ENCODE measurements at regions of chr9 and their contacts with region 1.

Region 1: GRCh38 chr9:132901856-132902831 is 23.4 kb downstream of the SPACA9 start:
- DNase-seq: peak; percentile 77
- H3K4me3 Mint-ChIP-seq: no peak overlapping the region
- H3K27ac Mint-ChIP-seq: no peak overlapping the region
- H3K4me1 Mint-ChIP-seq: no peaks in the 10 kb centered on the region
- H3K27me3 Mint-ChIP-seq: no peaks in the 10 kb centered on the region
- CTCF ChIP-seq: peak; percentile 80

Region 2: DNA sequence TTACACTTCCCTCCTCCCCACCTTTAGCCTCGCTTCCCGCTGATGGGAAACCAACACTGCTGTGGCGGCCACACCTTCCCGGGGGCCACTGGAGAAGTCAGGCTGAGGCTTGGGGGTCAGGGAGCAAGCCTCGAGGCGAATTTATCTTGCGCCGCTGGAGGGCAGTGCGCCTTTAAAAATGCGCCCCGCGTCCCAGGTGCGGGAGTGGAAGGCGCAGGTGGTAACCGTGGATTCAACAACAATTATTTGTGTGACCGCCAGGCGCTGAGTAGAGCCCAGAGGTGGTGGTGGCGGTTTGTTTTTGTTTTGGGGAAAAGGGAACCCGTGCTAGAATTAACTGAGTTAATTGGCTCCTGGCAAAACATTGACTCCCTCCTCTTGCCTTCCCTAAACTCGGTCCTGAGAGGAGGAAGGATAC is 491.0 kb before region 1 on chr9:
- CTCF ChIA-PET with region 1: interaction called, 3 read pairs
- POLR2A ChIA-PET with region 1: no interaction called
- intact Hi-C with region 1: loop called (anchors 2 kb)
- DNase-seq: peak; percentile 64
- H3K4me3 Mint-ChIP-seq: peak overlapping the region; percentile 46
- H3K27ac Mint-ChIP-seq: no peak overlapping the region
- H3K4me1 Mint-ChIP-seq: peaks cover 12% of the 10 kb centered on the region
- H3K27me3 Mint-ChIP-seq: peaks cover 37% of the 10 kb centered on the region
- CTCF ChIP-seq: peak; percentile 77

Region 3: DNA sequence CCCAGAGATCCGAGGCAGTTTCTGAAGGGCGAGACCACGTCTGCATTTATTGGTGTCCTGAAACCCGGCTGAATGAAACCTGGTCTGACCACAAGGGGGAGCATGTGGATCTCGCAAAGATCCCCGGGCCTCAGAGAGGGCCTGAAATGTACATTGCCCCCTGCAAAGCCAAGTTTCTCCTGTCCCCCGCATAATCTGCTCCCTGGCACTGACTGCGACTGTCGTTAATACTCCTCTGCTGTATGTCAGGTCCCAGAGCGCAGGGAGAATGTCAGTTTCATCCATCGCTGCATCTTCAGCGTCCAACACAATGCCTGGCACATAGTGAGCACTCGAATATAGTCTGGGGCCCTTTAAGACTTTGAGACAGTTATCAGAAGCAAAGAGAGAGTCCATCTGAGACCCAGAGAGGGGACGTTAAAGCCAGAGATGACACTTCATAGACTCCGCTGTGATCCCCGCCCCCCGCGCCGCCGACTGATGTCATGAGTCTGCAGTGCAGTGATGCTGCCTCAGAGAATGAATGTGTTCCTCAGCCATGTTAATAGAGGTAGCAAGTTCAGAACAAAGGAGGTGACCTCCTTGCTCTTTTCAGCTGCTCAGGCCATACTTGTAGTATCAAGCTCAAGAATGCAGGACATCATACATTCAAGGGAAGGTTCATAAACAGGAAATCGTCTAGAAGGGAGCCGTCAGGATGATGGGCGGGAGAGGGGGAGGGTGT is 394.2 kb before region 1 on chr9:
- CTCF ChIA-PET with region 1: no interaction called
- POLR2A ChIA-PET with region 1: no interaction called
- intact Hi-C with region 1: loop called (anchors 5 kb)
- DNase-seq: peak; percentile 65
- H3K4me3 Mint-ChIP-seq: no peak overlapping the region
- H3K27ac Mint-ChIP-seq: no peak overlapping the region
- H3K4me1 Mint-ChIP-seq: no peaks in the 10 kb centered on the region
- H3K27me3 Mint-ChIP-seq: peaks cover 62% of the 10 kb centered on the region
- CTCF ChIP-seq: peak; percentile 73

Region 4: DNA sequence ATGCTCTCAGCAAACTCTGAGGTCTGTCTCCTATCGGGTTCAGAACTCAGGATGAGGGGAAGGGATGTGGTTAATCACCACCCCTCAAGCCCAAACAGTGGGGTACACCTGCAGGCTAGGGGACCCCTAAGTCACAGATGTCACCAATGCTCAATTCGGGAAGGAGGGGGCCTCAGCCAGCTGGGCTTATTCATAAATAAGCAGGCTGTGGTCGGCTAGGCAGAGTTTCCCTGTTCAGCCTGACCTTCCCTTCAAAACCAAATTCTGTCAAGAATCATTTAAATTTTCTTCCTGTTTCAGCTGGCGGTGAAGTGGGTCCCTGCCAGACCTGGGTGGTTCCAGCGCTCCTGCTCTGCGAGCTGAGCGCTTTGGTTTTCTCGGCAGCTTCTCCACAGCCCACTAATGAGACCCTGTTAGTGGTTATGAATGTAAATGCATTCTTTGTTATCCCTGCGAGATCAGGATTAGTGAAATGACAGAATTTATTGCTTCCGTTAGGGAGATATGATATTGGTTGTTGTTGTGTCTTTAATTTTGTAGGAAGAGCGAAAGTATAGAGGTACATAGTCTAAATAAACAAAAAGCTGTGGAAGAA is 92.4 kb before region 1 on chr9:
- CTCF ChIA-PET with region 1: interaction called, 4 read pairs
- POLR2A ChIA-PET with region 1: interaction called, 3 read pairs
- intact Hi-C with region 1: loop called (anchors 5 kb)
- DNase-seq: no peak
- H3K4me3 Mint-ChIP-seq: no peak overlapping the region
- H3K27ac Mint-ChIP-seq: no peak overlapping the region
- H3K4me1 Mint-ChIP-seq: no peaks in the 10 kb centered on the region
- H3K27me3 Mint-ChIP-seq: peaks cover 61% of the 10 kb centered on the region
- CTCF ChIP-seq: no peak

Region 5: DNA sequence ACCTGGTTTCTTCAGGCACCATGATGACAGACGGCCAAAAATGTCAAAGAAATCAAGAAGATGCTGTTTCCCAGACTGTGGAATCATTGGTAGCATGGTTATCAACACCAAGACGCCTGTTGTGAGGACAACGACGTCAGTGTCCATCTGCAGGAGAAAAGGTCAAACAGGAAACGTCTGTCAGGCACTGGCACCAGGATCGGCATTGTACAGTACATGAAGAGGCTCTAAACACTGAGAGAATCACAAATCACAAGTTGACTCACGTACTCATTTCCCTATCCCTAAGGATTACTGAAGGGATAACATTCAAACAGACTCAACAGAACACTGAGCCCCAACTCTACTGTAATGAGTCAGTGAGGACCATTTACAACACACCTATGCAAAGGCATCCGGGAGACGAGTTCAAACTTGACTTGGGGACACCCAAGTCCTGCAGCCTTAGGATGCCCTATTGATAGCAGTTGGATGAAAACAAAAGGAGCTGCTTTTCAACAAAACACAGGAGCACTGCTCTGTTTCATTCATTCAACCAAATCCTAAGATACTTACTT is 21.3 kb after region 1 on chr9:
- CTCF ChIA-PET with region 1: interaction called, 19 read pairs
- POLR2A ChIA-PET with region 1: interaction called, 3 read pairs
- intact Hi-C with region 1: no loop called
- DNase-seq: peak; percentile 60
- H3K4me3 Mint-ChIP-seq: no peak overlapping the region
- H3K27ac Mint-ChIP-seq: no peak overlapping the region
- H3K4me1 Mint-ChIP-seq: no peaks in the 10 kb centered on the region
- H3K27me3 Mint-ChIP-seq: no peaks in the 10 kb centered on the region
- CTCF ChIP-seq: no peak

Region 6: GRCh38 chr9:132931178-132931735 is 29.1 kb after region 1 on chr9:
- CTCF ChIA-PET with region 1: interaction called, 10 read pairs
- POLR2A ChIA-PET with region 1: no interaction called
- intact Hi-C with region 1: no loop called
- DNase-seq: no peak
- H3K4me3 Mint-ChIP-seq: no peak overlapping the region
- H3K27ac Mint-ChIP-seq: no peak overlapping the region
- H3K4me1 Mint-ChIP-seq: no peaks in the 10 kb centered on the region
- H3K27me3 Mint-ChIP-seq: no peaks in the 10 kb centered on the region
- CTCF ChIP-seq: no peak

Region 7: DNA sequence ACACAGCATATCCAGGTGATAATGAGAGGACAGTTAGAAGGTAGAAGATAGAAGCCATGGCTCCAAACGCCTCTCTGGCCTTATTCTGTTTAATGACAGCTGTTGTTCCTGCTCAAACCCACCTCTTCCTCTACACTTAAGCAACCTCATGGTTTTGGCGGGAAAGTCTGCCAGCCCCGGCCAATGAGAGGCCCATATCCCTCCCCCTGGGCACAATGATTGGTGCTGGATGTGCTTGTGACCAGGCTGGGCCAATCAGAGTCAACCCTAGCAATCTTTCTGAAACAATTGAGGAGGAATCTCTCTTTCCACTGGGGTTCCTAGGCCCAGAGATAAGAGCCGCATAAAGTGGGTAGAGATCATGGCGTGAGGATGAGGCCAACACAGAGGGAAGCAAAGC is 71.6 kb after region 1 on chr9:
- CTCF ChIA-PET with region 1: interaction called, 6 read pairs
- POLR2A ChIA-PET with region 1: no interaction called
- intact Hi-C with region 1: loop called (anchors 2 kb)
- DNase-seq: peak; percentile 11
- H3K4me3 Mint-ChIP-seq: no peak overlapping the region
- H3K27ac Mint-ChIP-seq: no peak overlapping the region
- H3K4me1 Mint-ChIP-seq: peaks cover 5% of the 10 kb centered on the region
- H3K27me3 Mint-ChIP-seq: peaks cover 66% of the 10 kb centered on the region
- CTCF ChIP-seq: no peak

Region 8: GRCh38 chr9:133048569-133048968 is 146.4 kb after region 1 on chr9:
- CTCF ChIA-PET with region 1: no interaction called
- POLR2A ChIA-PET with region 1: no interaction called
- intact Hi-C with region 1: no loop called
- DNase-seq: no peak
- H3K4me3 Mint-ChIP-seq: no peak overlapping the region
- H3K27ac Mint-ChIP-seq: no peak overlapping the region
- H3K4me1 Mint-ChIP-seq: no peaks in the 10 kb centered on the region
- H3K27me3 Mint-ChIP-seq: no peaks in the 10 kb centered on the region
- CTCF ChIP-seq: peak; percentile 36

Measured in MCF 10A (cell line).